ENCODE measurements at regions of chr15 and their contacts with region 1.

Region 1: GRCh38 chr15:73927476-73928240 is 1.4 kb downstream of the LOXL1 start:
- DNase-seq: peak; percentile 56 to 87 (median 77)
- ATAC-seq: peak; percentile 88
- H3K4me3 ChIP-seq: peak overlapping the region; percentile 49 to 79
- H3K4me3 Mint-ChIP-seq: peak overlapping the region; percentile 79
- H3K27ac ChIP-seq: peak overlapping the region in 1 of 2 experiments; percentile 41
- H3K27ac Mint-ChIP-seq: peak overlapping the region; percentile 20
- H3K4me1 ChIP-seq: peaks cover 27% of the 10 kb centered on the region
- H3K4me1 Mint-ChIP-seq: peaks cover 38% of the 10 kb centered on the region
- H3K27me3 ChIP-seq: no peaks in the 10 kb centered on the region
- H3K27me3 Mint-ChIP-seq: no peaks in the 10 kb centered on the region
- CTCF ChIP-seq: peak; percentile 83

Region 2: DNA sequence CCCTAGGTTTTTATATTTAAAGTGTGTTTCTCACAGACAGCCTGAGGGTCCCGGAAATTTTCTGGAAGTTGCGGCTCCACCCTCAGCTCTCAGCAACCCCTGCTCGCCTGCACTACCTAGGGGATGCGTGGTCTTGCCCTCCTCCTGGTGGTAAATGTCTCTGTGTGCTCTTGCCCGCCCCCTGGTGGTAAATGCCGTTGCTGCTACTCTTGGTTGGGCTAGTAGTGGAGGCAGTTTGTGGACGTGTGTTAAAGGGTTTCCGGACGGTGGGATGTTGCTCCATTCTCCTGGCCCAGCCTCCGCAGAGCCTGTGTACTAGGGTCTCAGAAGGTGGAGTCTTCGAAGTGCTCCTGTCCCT is 37.1 kb after region 1 on chr15:
- CTCF ChIA-PET with region 1: interaction called, 9 read pairs
- POLR2A ChIA-PET with region 1: interaction called, 3 read pairs
- intact Hi-C with region 1: loop called (anchors 1 to 2 kb)
- DNase-seq: peak; percentile 74 to 94 (median 88)
- ATAC-seq: peak; percentile 89
- H3K4me3 ChIP-seq: peak overlapping the region; percentile 46 to 51
- H3K4me3 Mint-ChIP-seq: peak overlapping the region; percentile 83
- H3K27ac ChIP-seq: no peak overlapping the region
- H3K27ac Mint-ChIP-seq: peak overlapping the region; percentile 39
- H3K4me1 ChIP-seq: peaks cover 26% of the 10 kb centered on the region
- H3K4me1 Mint-ChIP-seq: peaks cover 34% of the 10 kb centered on the region
- H3K27me3 ChIP-seq: no peaks in the 10 kb centered on the region
- H3K27me3 Mint-ChIP-seq: no peaks in the 10 kb centered on the region
- CTCF ChIP-seq: peak; percentile 95